ENCODE measurements at regions of chr4 and their contacts with region 1.

Region 1: GRCh38 chr4:71229477-71230270 is 109.1 kb upstream of the SLC4A4 start:
- DNase-seq: no peak
- ATAC-seq: peak; percentile 62 to 82 (median 66)
- H3K4me3 ChIP-seq: no peak overlapping the region
- H3K27ac ChIP-seq: peak overlapping the region; percentile 85
- H3K4me1 ChIP-seq: peaks cover 18% of the 10 kb centered on the region
- H3K27me3 ChIP-seq: no peaks in the 10 kb centered on the region
- CTCF ChIP-seq: peak; percentile 71

Region 2: DNA sequence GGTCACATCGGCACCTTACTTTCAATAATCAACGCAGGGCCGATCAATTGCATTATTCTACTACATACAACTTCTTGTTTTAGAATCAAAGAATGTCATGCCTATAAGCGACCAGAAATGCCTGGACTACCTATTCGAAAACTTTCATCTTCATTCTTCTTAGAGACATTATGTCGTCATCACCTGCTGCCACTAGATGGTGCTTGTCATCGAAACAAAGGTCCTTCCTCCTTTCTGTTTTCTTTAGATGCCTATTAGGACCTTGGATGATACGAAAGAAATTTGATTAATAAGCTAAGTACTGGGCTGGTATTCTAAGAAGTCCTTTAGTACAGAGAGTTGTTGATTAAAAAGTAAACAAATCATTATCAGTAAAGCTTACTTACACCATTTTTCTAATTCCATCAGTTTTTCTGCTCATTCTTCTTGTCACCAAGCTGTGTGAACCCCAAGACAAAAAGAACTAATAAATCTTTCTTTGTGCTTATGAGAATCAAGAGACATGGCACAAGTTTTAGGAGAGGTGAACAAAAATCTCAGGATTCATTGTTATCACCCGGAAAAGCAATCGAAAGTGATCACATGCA is 45.4 kb before region 1 on chr4:
- intact Hi-C with region 1: loop called in 1 of 2 experiments (anchors 5 kb)
- DNase-seq: no peak
- ATAC-seq: peak in 1 of 4 donors; percentile 41
- H3K4me3 ChIP-seq: no peak overlapping the region
- H3K27ac ChIP-seq: no peak overlapping the region
- H3K4me1 ChIP-seq: peaks cover 10% of the 10 kb centered on the region
- H3K27me3 ChIP-seq: no peaks in the 10 kb centered on the region
- CTCF ChIP-seq: peak; percentile 68

Region 3: DNA sequence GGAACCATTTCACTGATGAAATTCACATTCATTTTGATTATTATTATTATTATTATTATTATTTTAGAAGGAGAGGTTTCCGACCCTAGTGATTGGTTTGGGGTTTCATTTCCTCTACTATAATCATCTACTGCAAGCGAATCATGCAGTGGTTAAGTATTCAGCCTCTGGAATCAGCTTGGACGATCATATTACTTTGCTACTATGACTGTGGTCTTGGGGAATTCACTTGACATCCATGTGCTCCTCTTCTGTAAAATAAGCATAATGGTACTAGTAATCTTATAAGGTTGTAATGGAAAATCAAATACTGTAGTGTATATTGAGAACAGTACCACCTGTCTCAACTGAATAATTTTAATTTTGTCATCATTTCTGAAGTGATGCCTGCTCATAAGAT is 22.9 kb before region 1 on chr4:
- intact Hi-C with region 1: loop called in 1 of 2 experiments (anchors 1 kb)
- DNase-seq: no peak
- ATAC-seq: no peak
- H3K4me3 ChIP-seq: no peak overlapping the region
- H3K27ac ChIP-seq: no peak overlapping the region
- H3K4me1 ChIP-seq: peaks cover 11% of the 10 kb centered on the region
- H3K27me3 ChIP-seq: no peaks in the 10 kb centered on the region
- CTCF ChIP-seq: no peak

Region 4: GRCh38 chr4:71266090-71266794 is 36.6 kb after region 1 on chr4:
- intact Hi-C with region 1: no loop called
- DNase-seq: peak in 1 of 2 donors; percentile 19
- ATAC-seq: peak in 1 of 4 donors; percentile 35
- H3K4me3 ChIP-seq: no peak overlapping the region
- H3K27ac ChIP-seq: no peak overlapping the region
- H3K4me1 ChIP-seq: peaks cover 14% of the 10 kb centered on the region
- H3K27me3 ChIP-seq: no peaks in the 10 kb centered on the region
- CTCF ChIP-seq: no peak

Region 5: GRCh38 chr4:71287305-71287704 is 57.6 kb after region 1 on chr4:
- intact Hi-C with region 1: loop called in 1 of 2 experiments (anchors 5 kb)
- DNase-seq: no peak
- ATAC-seq: no peak
- H3K4me3 ChIP-seq: no peak overlapping the region
- H3K27ac ChIP-seq: no peak overlapping the region
- H3K4me1 ChIP-seq: peaks cover 46% of the 10 kb centered on the region
- H3K27me3 ChIP-seq: no peaks in the 10 kb centered on the region
- CTCF ChIP-seq: no peak

Region 6: DNA sequence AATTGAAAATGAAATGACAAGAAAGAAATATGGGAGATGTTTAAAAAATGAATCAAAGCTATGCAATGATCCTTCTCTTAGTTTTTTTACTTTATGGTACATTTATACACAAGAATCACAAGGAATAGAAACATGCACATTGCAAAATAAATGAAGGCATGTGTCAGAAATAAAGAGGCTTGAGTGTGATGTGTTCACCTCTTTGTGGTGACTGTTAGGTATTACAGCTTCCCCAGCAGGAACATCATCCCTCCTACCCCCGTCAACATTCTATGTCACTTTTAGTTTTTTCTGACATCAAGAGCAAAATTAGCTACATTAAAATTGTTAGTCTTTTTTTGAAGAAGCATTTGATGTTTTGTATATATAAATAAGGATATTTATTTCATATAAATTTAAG is 323.9 kb after region 1 on chr4:
- intact Hi-C with region 1: loop called (anchors 2 to 5 kb)
- DNase-seq: no peak
- ATAC-seq: peak; percentile 62 to 87 (median 70)
- H3K4me3 ChIP-seq: no peak overlapping the region
- H3K27ac ChIP-seq: no peak overlapping the region
- H3K4me1 ChIP-seq: no peaks in the 10 kb centered on the region
- H3K27me3 ChIP-seq: no peaks in the 10 kb centered on the region
- CTCF ChIP-seq: peak; percentile 64

Region 7: DNA sequence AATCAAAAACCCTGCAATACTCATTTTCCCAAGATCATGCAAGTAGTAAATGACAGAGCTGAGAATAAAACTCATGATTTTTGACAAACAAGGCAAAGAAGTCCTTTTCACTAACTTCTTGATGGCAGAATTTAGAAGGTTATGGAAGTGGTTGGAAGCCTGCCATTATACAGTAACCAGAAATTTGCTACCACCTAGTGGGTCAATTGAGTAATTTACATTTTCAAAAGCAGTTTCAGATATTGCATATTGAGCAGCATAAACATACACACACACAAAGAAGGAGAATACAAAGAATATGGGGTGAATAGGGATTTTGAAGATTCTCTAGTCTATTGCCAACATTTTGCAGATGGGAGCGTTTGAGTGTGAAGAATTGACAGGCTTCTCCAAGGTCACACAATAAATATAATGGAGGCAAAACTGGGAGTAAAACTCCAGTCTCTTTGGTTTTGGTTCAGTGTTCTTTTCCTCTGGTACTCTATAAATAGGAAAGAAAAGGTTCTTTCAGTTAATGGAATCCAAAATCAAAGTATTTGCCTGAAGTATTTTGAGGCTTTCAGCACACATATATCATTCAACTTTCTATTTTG is 484.0 kb after region 1 on chr4:
- intact Hi-C with region 1: loop called in 1 of 2 experiments (anchors 10 kb)
- DNase-seq: no peak
- ATAC-seq: no peak
- H3K4me3 ChIP-seq: no peak overlapping the region
- H3K27ac ChIP-seq: no peak overlapping the region
- H3K4me1 ChIP-seq: no peaks in the 10 kb centered on the region
- H3K27me3 ChIP-seq: no peaks in the 10 kb centered on the region
- CTCF ChIP-seq: peak; percentile 54